Activated CD4-positive, alpha-beta T cell treated with anti-CD3 and anti-CD28 coated beads, Interleukin-2, amount 10 ng/mL, durations not matched to agents 24 days and 14 days (primary cell): ENCODE measurements at regions of chr9 and their contacts with region 1.

Region 1: GRCh38 chr9:21789541-21790037 is 12.8 kb upstream of the MTAP start:
- DNase-seq: peak; percentile 88
- H3K4me3 Mint-ChIP-seq: peak overlapping the region; percentile 75
- H3K27ac Mint-ChIP-seq: no peak overlapping the region
- H3K4me1 Mint-ChIP-seq: peaks cover 3% of the 10 kb centered on the region
- H3K27me3 Mint-ChIP-seq: peaks cover 42% of the 10 kb centered on the region

Region 2: DNA sequence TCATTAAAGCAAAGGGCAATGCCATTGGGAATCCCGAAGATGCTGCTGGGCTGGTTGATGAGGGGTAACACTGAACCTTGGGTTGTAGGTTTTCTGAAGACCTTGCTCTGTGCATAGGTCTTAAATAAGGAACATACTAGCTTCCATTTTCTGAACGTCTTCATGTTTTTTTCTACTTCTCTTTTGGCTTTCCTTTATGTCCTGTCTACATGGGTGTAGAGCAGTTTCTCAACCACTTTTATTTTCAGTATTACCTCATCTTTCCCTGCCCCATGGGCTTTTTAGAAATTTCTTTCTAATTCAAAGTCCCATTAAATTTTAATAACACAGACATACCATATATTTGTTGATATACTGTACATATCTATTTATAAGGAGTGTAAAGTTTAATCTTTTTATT is 549.7 kb before region 1 on chr9 and contains the start of gene IFNA14:
- intact Hi-C with region 1: loop called (anchors 10 kb)
- DNase-seq: no peak
- H3K4me3 Mint-ChIP-seq: no peak within 1 kb of the TSS
- H3K27ac Mint-ChIP-seq: no peak within 1 kb of the TSS
- H3K4me1 Mint-ChIP-seq: peaks cover 4% of the 10 kb centered on the region
- H3K27me3 Mint-ChIP-seq: peaks cover 37% of the 10 kb centered on the region
- total RNA-seq, gene IFNA14: not detected in 2 replicates

Region 3: DNA sequence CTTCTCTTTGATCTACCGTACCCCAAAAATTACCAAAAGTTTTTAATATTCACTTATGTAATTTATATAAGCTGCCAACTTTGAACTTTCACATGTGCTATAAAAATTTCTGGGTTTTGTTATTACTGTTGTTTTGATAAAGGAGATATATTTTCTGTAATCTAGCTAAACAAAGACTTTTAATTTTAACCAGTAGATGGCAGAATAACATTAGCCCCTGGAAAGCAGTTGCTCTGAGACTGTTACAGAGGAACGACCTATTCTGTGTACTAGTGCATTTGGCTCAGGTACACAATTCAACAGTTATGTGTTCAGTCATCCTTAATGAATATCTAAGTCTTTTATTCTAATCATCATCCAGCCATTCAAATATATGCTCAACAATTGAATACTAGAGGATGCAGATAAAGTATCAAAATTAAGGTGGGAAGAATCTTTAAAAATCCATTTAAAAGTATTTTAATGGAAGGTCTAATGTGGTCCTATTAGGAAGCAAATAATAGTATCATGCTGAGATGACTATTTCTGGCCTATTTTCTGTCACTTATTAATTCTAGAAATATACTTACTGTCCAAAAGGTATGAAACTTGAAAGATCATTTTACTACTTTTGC is 463.0 kb before region 1 on chr9:
- intact Hi-C with region 1: loop called (anchors 2 kb)
- DNase-seq: no peak
- H3K4me3 Mint-ChIP-seq: no peak overlapping the region
- H3K27ac Mint-ChIP-seq: no peak overlapping the region
- H3K4me1 Mint-ChIP-seq: peaks cover 24% of the 10 kb centered on the region
- H3K27me3 Mint-ChIP-seq: no peaks in the 10 kb centered on the region

Region 4: GRCh38 chr9:21465859-21466518 is 323.6 kb before region 1 on chr9:
- intact Hi-C with region 1: loop called (anchors 1 kb)
- DNase-seq: peak; percentile 80
- H3K4me3 Mint-ChIP-seq: no peak overlapping the region
- H3K27ac Mint-ChIP-seq: no peak overlapping the region
- H3K4me1 Mint-ChIP-seq: no peaks in the 10 kb centered on the region
- H3K27me3 Mint-ChIP-seq: peaks cover 28% of the 10 kb centered on the region

Region 5: GRCh38 chr9:21709464-21710058 is 80.0 kb before region 1 on chr9:
- intact Hi-C with region 1: loop called (anchors 1 kb)
- DNase-seq: peak; percentile 89
- H3K4me3 Mint-ChIP-seq: no peak overlapping the region
- H3K27ac Mint-ChIP-seq: no peak overlapping the region
- H3K4me1 Mint-ChIP-seq: peaks cover 13% of the 10 kb centered on the region
- H3K27me3 Mint-ChIP-seq: peaks cover 35% of the 10 kb centered on the region

Region 6: GRCh38 chr9:21741151-21741550 is 48.4 kb before region 1 on chr9:
- intact Hi-C with region 1: no loop called
- DNase-seq: no peak
- H3K4me3 Mint-ChIP-seq: no peak overlapping the region
- H3K27ac Mint-ChIP-seq: no peak overlapping the region
- H3K4me1 Mint-ChIP-seq: no peaks in the 10 kb centered on the region
- H3K27me3 Mint-ChIP-seq: peaks cover 51% of the 10 kb centered on the region